Activated B cell treated with CpG ODN at 0.5 μM for 24 hours (primary cell): ENCODE measurements at regions of chr9 and their contacts with region 1.

Region 1: GRCh38 chr9:127869310-127870152 is 7.9 kb downstream of the AK1 start:
- DNase-seq: peak; percentile 81
- ATAC-seq: peak; percentile 79
- H3K4me3 Mint-ChIP-seq: no peak overlapping the region
- H3K27ac Mint-ChIP-seq: no peak overlapping the region
- H3K4me1 Mint-ChIP-seq: peaks cover 22% of the 10 kb centered on the region
- H3K27me3 Mint-ChIP-seq: no peaks in the 10 kb centered on the region
- CTCF ChIP-seq: no peak

Region 2: GRCh38 chr9:127380479-127380878 is 489.1 kb before region 1 on chr9:
- CTCF ChIA-PET with region 1: no interaction called
- POLR2A ChIA-PET with region 1: no interaction called
- intact Hi-C with region 1: no loop called
- DNase-seq: no peak
- ATAC-seq: no peak
- H3K4me3 Mint-ChIP-seq: no peak overlapping the region
- H3K27ac Mint-ChIP-seq: no peak overlapping the region
- H3K4me1 Mint-ChIP-seq: no peaks in the 10 kb centered on the region
- H3K27me3 Mint-ChIP-seq: peaks cover 7% of the 10 kb centered on the region
- CTCF ChIP-seq: no peak

Region 3: GRCh38 chr9:127503947-127504782 is 365.4 kb before region 1 on chr9:
- CTCF ChIA-PET with region 1: interaction called, 13 read pairs
- POLR2A ChIA-PET with region 1: no interaction called
- intact Hi-C with region 1: loop called (anchors 1 kb)
- DNase-seq: peak; percentile 60
- ATAC-seq: peak; percentile 93
- H3K4me3 Mint-ChIP-seq: no peak overlapping the region
- H3K27ac Mint-ChIP-seq: no peak overlapping the region
- H3K4me1 Mint-ChIP-seq: no peaks in the 10 kb centered on the region
- H3K27me3 Mint-ChIP-seq: no peaks in the 10 kb centered on the region
- CTCF ChIP-seq: no peak

Region 4: DNA sequence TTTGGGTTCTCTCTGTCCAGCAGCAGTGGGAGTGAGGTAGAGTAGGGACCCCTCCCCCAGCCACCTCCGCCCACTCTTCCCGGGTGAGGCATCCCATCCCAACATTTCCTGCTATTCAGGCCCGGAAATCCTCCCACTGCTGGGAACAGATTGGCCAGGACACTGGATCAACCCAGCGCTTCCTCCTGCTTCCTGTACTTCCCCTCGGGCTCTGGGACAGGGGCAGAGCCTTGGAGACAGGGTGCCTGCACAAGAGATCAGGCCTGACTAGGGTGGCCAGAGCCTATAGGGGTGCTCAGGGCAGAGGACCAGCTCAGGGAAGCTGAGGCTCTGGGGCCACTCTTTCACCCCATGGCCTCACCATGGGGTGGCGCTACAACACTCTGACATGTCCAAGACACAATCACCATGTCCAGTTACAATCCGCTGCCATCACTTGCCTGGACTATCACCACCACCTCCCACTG is 105.6 kb before region 1 on chr9:
- CTCF ChIA-PET with region 1: interaction called, 25 read pairs
- POLR2A ChIA-PET with region 1: no interaction called
- intact Hi-C with region 1: no loop called
- DNase-seq: no peak
- ATAC-seq: peak; percentile 51
- H3K4me3 Mint-ChIP-seq: no peak overlapping the region
- H3K27ac Mint-ChIP-seq: peak overlapping the region; percentile 60
- H3K4me1 Mint-ChIP-seq: peaks cover 61% of the 10 kb centered on the region
- H3K27me3 Mint-ChIP-seq: no peaks in the 10 kb centered on the region
- CTCF ChIP-seq: no peak

Region 5: DNA sequence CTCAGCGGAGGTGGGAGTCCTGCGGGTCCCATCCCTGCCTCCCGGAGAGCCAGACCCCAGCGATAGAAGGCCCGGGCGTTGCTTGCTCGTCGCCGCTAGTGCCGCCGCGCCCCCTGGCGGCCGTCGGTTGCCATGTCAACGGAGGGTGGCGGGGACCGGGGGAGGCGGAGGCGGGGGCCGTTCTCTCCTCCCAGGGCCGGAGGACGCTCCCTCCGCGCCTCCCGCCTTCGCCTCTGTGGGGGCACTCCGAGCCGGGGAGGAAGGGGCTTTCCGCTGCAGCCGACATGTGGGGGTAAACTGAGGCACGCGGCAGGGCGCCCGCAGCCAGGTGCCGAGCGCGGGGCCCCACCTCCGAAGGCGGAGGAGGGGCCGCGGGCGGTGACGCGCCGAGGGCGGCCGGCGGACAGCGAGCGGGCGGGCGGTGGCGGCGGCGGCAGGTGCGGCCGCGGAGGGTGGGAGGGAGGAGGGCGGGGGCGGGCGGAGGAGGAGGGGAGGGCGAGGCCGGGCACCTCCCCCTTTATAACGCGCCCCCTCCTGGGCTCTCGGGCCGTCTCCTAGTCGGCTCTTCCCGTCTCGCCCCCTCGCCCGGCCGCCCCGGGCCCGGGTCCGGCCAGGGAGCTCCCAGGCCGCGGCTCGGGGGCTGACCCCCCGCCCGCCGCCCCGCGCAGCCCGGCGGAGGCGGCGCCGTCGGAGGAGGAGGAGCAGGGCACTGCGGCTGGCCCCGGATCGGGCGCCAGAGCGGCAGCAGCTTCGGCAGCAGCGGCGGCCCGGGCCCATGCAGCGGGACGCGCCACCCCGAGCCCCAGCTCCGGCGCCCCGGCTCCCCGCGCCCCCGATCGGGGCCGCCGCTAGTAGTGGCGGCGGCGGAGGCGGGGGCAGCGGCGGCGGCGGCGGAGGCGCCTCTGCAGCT is 84.3 kb before region 1 on chr9:
- CTCF ChIA-PET with region 1: interaction called, 39 read pairs
- POLR2A ChIA-PET with region 1: interaction called, 5 read pairs
- intact Hi-C with region 1: loop called (anchors 1 kb)
- DNase-seq: peak; percentile 92
- ATAC-seq: peak; percentile 56
- H3K4me3 Mint-ChIP-seq: peak overlapping the region; percentile 92
- H3K27ac Mint-ChIP-seq: peak overlapping the region; percentile 97
- H3K4me1 Mint-ChIP-seq: peaks cover 63% of the 10 kb centered on the region
- H3K27me3 Mint-ChIP-seq: no peaks in the 10 kb centered on the region
- CTCF ChIP-seq: peak; percentile 43

Region 6: DNA sequence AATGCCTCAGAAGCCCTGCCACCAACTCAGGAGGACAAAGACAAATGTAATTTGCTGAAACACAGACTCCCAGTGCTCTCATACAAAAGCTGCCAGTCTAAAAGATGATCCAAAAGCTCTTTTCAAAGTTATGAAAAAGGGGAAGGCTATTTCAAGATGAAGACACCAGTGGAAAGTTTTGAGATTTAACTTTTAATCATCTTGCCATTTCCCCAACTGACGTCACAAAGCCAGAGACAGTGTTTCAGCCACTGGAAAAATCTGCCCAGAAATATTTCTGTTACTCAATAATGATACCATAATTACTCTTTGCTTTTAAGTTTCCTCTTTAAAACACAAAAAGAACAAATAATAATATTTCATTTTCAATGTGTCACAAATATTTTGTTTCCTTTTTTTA is 36.0 kb before region 1 on chr9:
- CTCF ChIA-PET with region 1: no interaction called
- POLR2A ChIA-PET with region 1: interaction called, 16 read pairs
- intact Hi-C with region 1: no loop called
- DNase-seq: no peak
- ATAC-seq: no peak
- H3K4me3 Mint-ChIP-seq: no peak overlapping the region
- H3K27ac Mint-ChIP-seq: no peak overlapping the region
- H3K4me1 Mint-ChIP-seq: peaks cover 8% of the 10 kb centered on the region
- H3K27me3 Mint-ChIP-seq: no peaks in the 10 kb centered on the region
- CTCF ChIP-seq: no peak

Region 7: GRCh38 chr9:127905004-127905728 is 35.6 kb after region 1 on chr9:
- CTCF ChIA-PET with region 1: interaction called, 12 read pairs
- POLR2A ChIA-PET with region 1: no interaction called
- intact Hi-C with region 1: no loop called
- DNase-seq: peak; percentile 39
- ATAC-seq: peak; percentile 50
- H3K4me3 Mint-ChIP-seq: peak overlapping the region; percentile 80
- H3K27ac Mint-ChIP-seq: peak overlapping the region; percentile 98
- H3K4me1 Mint-ChIP-seq: peaks cover 72% of the 10 kb centered on the region
- H3K27me3 Mint-ChIP-seq: no peaks in the 10 kb centered on the region
- CTCF ChIP-seq: no peak

Region 8: GRCh38 chr9:127937388-127938280 is 68.1 kb after region 1 on chr9 and contains the start of gene DPM2:
- CTCF ChIA-PET with region 1: no interaction called
- POLR2A ChIA-PET with region 1: no interaction called
- intact Hi-C with region 1: no loop called
- DNase-seq: peak; percentile 82
- ATAC-seq: peak; percentile 96
- H3K4me3 Mint-ChIP-seq: peak within 1 kb of the TSS; percentile 94
- H3K27ac Mint-ChIP-seq: peak within 1 kb of the TSS; percentile 94
- H3K4me1 Mint-ChIP-seq: peaks cover 37% of the 10 kb centered on the region
- H3K27me3 Mint-ChIP-seq: no peaks in the 10 kb centered on the region
- CTCF ChIP-seq: no peak
- total RNA-seq, gene DPM2: 41.4 and 50.6 TPM in 2 replicates

Region 9: DNA sequence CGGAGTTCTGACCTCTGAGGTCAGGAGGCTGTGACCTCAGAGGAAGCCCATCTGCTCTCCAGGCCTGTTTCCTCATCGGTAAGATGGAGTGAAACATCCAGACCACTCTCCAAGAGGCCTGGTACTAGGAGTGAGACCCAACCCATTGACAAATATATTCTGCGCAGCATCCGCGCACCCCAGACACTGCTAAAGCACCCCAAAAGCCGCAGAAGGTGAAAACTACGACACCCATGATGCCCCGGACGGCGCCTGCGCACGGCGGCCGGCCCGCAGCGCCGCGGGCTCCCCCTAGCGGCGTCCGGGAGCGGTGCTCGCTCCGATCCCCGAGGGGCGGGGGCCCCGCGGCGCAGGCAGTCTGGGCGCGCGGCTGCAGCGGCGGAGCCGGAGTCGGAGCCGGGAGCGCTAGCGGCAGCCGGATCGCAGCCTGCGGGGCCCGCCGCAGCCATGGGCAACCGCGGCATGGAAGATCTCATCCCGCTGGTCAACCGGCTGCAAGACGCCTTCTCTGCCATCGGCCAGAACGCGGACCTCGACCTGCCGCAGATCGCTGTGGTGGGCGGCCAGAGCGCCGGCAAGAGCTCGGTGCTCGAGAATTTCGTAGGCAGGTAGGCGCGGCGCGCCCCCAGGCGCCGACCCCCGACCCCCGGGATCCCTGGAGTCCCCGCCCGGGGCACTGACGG is 333.6 kb after region 1 on chr9 and contains the start of gene DNM1:
- CTCF ChIA-PET with region 1: no interaction called
- POLR2A ChIA-PET with region 1: no interaction called
- intact Hi-C with region 1: no loop called
- DNase-seq: peak; percentile 78
- ATAC-seq: peak; percentile 98
- H3K4me3 Mint-ChIP-seq: peak within 1 kb of the TSS; percentile 85
- H3K27ac Mint-ChIP-seq: peak within 1 kb of the TSS; percentile 56
- H3K4me1 Mint-ChIP-seq: peaks cover 7% of the 10 kb centered on the region
- H3K27me3 Mint-ChIP-seq: peaks cover 18% of the 10 kb centered on the region
- CTCF ChIP-seq: peak; percentile 59
- total RNA-seq, gene DNM1: 0.81 and 0.86 TPM in 2 replicates